ENCODE measurements at regions of chr1 and their contacts with region 1.

Region 1: GRCh38 chr1:234309598-234310459 is 63.4 kb upstream of the COA6 start:
- DNase-seq: peak; percentile 40
- H3K4me3 ChIP-seq: no peak overlapping the region
- H3K27ac ChIP-seq: no peak overlapping the region
- H3K4me1 ChIP-seq: no peaks in the 10 kb centered on the region
- H3K27me3 ChIP-seq: peaks cover 51% of the 10 kb centered on the region
- CTCF ChIP-seq: peak; percentile 88

Region 2: GRCh38 chr1:234114648-234115307 is 195.1 kb before region 1 on chr1:
- intact Hi-C with region 1: loop called (anchors 10 kb)
- DNase-seq: no peak
- H3K4me3 ChIP-seq: peak overlapping the region; percentile 9
- H3K27ac ChIP-seq: no peak overlapping the region
- H3K4me1 ChIP-seq: peaks cover 3% of the 10 kb centered on the region
- H3K27me3 ChIP-seq: peaks cover 38% of the 10 kb centered on the region
- CTCF ChIP-seq: peak; percentile 73

Region 3: DNA sequence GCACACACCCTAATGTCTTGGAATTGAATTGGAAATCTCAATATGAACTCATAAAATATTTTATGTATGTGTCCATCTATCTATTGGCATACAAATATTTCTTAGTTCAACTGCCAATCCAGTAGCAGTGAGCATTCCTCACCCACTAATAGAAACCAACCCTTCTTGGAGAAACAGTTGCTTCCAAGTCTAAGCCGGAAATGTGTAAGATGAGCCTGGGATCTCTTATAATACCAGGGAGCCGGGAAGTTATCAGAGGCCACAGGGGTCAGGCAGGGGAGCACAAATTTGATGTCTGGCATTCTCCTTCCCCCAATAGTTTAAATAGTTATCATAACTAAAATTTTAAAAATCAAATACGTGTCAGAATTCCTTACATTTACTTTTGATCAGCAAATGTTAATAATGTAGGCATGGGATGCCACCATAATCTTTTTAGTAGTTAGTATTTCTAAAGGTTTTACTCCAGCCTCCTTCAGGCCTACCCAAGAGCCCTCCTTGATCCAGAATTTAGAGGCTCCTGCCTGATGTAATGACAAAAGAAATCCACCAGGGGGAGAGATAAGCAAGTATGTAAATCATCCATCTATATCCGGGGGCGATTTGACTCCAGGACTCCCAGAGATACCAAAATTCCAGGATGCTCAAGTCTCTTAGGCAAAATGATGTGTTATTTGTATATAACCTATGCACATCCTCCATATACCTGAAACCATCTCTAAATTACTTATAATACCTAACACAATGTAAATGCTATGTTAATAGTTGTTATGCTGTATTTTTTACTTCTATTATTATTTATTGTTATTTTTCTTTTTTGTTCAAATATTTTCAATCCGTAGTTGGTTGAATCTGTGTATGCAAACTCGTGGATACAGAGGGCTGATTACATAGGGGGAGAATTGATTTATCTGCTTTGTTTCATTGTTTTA is 155.2 kb before region 1 on chr1:
- intact Hi-C with region 1: loop called (anchors 10 kb)
- DNase-seq: no peak
- H3K4me3 ChIP-seq: no peak overlapping the region
- H3K27ac ChIP-seq: no peak overlapping the region
- H3K4me1 ChIP-seq: no peaks in the 10 kb centered on the region
- H3K27me3 ChIP-seq: peaks cover 15% of the 10 kb centered on the region
- CTCF ChIP-seq: peak; percentile 80

Measured in left ventricle myocardium inferior (tissue), 1 donor.